Activated CD8-positive, alpha-beta T cell treated with anti-CD3 and anti-CD28 coated beads, Interleukin-2, amount 10 ng/mL, durations not matched to agents 7 days and 5 days (primary cell): ENCODE measurements at regions of chr9 and their contacts with region 1.

Region 1: GRCh38 chr9:122125158-122125508 is 32.0 kb upstream of the TTLL11 start:
- DNase-seq: peak; percentile 82
- ATAC-seq: peak; percentile 87
- H3K4me3 Mint-ChIP-seq: no peak overlapping the region
- H3K27ac Mint-ChIP-seq: no peak overlapping the region
- H3K4me1 Mint-ChIP-seq: peaks cover 22% of the 10 kb centered on the region
- H3K27me3 Mint-ChIP-seq: peaks cover 30% of the 10 kb centered on the region

Region 2: DNA sequence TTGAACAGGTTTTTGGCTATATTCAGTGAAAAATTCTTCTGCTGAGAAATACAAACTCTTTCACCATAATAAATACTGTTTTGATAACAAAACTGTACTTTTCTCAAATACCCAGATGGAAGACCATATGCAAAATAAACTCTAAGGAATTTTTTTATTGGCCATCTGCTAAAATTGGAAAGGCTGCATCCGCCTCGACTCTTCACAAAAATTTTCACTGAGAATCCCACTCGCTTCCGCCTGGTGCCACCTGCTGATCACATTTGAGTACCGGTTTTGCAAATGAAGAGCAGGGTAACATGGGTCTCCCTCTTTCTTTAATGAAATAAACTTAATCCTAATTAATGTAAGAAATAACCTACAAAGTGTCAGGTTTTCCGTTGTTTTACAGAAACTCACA is 108.4 kb before region 1 on chr9:
- CTCF ChIA-PET with region 1: no interaction called
- POLR2A ChIA-PET with region 1: no interaction called
- DNase-seq: no peak
- ATAC-seq: no peak
- H3K4me3 Mint-ChIP-seq: no peak overlapping the region
- H3K27ac Mint-ChIP-seq: no peak overlapping the region
- H3K4me1 Mint-ChIP-seq: no peaks in the 10 kb centered on the region
- H3K27me3 Mint-ChIP-seq: no peaks in the 10 kb centered on the region

Region 3: GRCh38 chr9:122099271-122099869 is 25.8 kb before region 1 on chr9:
- CTCF ChIA-PET with region 1: interaction called, 254 read pairs
- POLR2A ChIA-PET with region 1: no interaction called
- DNase-seq: peak; percentile 85
- ATAC-seq: peak; percentile 74
- H3K4me3 Mint-ChIP-seq: peak overlapping the region; percentile 32
- H3K27ac Mint-ChIP-seq: no peak overlapping the region
- H3K4me1 Mint-ChIP-seq: peaks cover 13% of the 10 kb centered on the region
- H3K27me3 Mint-ChIP-seq: peaks cover 24% of the 10 kb centered on the region

Region 4: GRCh38 chr9:122159026-122159924 is 34.1 kb after region 1 on chr9 and contains the starts of genes MORN5 and NDUFA8:
- CTCF ChIA-PET with region 1: interaction called, 12 read pairs
- POLR2A ChIA-PET with region 1: no interaction called
- DNase-seq: peak; percentile 95
- ATAC-seq: peak; percentile 98
- H3K4me3 Mint-ChIP-seq: peak within 1 kb of the TSS; percentile 98
- H3K27ac Mint-ChIP-seq: peak within 1 kb of the TSS; percentile 94
- H3K4me1 Mint-ChIP-seq: peaks cover 19% of the 10 kb centered on the region
- H3K27me3 Mint-ChIP-seq: peaks cover 13% of the 10 kb centered on the region
- total RNA-seq, gene MORN5: not detected
- total RNA-seq, gene NDUFA8: 40.5 to 42.2 TPM

Region 5: GRCh38 chr9:122453677-122454135 is 328.6 kb after region 1 on chr9:
- CTCF ChIA-PET with region 1: interaction called, 10 read pairs
- POLR2A ChIA-PET with region 1: no interaction called
- DNase-seq: no peak
- ATAC-seq: no peak
- H3K4me3 Mint-ChIP-seq: no peak overlapping the region
- H3K27ac Mint-ChIP-seq: no peak overlapping the region
- H3K4me1 Mint-ChIP-seq: no peaks in the 10 kb centered on the region
- H3K27me3 Mint-ChIP-seq: peaks cover 24% of the 10 kb centered on the region